Activated T-helper 1 cell treated with anti-CD3 and anti-CD28 coated beads, Interleukin-12 subunit alpha, Interleukin-12 subunit beta, Interleukin-2, Interleukin-4 antibody, amounts not matched to agents 30 ng/mL and 10 ng/mL and 1 ng/mL, durations not matched to agents 14 hours and 24 hours and 36 hours (primary cell): ENCODE measurements at regions of chr13 and their contacts with region 1.

Region 1: GRCh38 chr13:99436686-99437416 is 64.4 kb upstream of the TM9SF2 start:
- DNase-seq: peak; percentile 88
- H3K4me3 Mint-ChIP-seq: peak overlapping the region; percentile 40
- H3K27ac Mint-ChIP-seq: peak overlapping the region; percentile 65
- H3K4me1 Mint-ChIP-seq: peaks cover 60% of the 10 kb centered on the region
- H3K27me3 Mint-ChIP-seq: peaks cover 29% of the 10 kb centered on the region

Region 2: GRCh38 chr13:99176309-99177276 is 260.3 kb before region 1 on chr13:
- intact Hi-C with region 1: loop called (anchors 1 kb)
- DNase-seq: peak; percentile 59
- H3K4me3 Mint-ChIP-seq: peak overlapping the region; percentile 40
- H3K27ac Mint-ChIP-seq: no peak overlapping the region
- H3K4me1 Mint-ChIP-seq: peaks cover 24% of the 10 kb centered on the region
- H3K27me3 Mint-ChIP-seq: peaks cover 17% of the 10 kb centered on the region

Region 3: DNA sequence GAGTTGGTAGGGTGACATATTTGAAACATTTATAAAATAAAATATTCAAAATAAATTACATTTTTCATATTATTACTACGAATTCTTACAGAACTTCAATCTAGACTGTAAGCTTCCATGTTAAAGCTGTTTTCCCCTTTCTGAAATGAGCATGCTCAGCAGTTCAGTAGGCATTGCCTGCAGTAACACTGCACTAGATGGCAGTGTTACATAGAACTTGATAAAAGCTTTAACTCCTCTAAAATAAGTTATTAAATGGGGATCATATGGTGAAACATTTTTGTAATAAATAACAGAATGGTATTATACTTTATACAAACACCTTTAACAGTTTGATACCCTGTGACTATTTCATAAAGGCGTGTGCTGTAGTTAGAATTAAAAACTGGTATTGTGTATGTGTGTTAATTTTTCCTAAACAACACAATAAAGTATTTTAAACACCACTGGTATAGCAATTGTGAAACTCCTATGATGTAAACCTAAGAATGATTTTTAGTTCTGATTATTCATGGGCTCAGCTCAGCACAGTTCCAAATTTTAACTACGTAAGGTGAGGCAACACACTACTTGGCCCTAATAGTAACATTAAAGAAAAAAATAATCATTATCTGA is 167.1 kb before region 1 on chr13:
- intact Hi-C with region 1: loop called (anchors 1 kb)
- DNase-seq: no peak
- H3K4me3 Mint-ChIP-seq: no peak overlapping the region
- H3K27ac Mint-ChIP-seq: no peak overlapping the region
- H3K4me1 Mint-ChIP-seq: peaks cover 55% of the 10 kb centered on the region
- H3K27me3 Mint-ChIP-seq: no peaks in the 10 kb centered on the region

Region 4: DNA sequence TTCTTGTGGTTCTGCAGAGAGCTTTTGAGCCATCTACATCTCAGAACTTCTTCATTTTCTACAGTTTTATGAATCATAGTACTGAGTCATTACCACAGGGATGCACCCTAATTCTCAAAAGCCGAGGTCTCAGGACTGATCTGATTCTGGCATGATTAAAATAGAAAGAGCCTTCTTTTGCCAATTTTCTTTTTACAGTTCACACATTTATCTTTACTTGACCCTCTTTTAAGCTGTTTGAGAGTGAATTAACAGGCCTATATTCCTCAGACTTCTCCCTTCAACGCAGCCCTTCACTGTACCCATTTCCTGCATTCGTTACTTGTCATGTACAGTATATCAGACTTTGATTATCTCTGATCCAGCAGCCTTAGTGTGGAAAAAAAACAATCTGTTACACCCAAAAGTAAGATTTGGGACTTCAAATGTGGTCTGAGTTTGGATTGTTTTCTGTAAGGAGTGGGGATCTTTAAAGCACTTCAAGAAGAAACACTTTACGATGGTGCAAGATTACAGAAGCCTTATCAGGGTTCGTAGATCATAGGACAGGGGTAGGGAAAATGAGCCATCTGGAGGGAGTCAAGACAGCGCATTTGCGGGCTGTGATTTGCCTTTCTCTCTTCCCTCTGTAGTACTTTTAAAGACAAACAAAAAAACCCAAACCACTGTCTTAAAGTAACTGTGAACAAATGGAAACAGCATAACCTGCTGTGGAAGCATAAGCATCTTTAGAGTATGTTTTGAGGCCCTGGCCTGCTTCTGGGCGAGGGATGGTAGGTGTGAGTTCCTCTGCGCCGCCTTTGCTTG is 114.4 kb before region 1 on chr13:
- intact Hi-C with region 1: loop called (anchors 1 kb)
- DNase-seq: no peak
- H3K4me3 Mint-ChIP-seq: peak overlapping the region; percentile 38
- H3K27ac Mint-ChIP-seq: peak overlapping the region; percentile 96
- H3K4me1 Mint-ChIP-seq: peaks cover 68% of the 10 kb centered on the region
- H3K27me3 Mint-ChIP-seq: no peaks in the 10 kb centered on the region

Region 5: DNA sequence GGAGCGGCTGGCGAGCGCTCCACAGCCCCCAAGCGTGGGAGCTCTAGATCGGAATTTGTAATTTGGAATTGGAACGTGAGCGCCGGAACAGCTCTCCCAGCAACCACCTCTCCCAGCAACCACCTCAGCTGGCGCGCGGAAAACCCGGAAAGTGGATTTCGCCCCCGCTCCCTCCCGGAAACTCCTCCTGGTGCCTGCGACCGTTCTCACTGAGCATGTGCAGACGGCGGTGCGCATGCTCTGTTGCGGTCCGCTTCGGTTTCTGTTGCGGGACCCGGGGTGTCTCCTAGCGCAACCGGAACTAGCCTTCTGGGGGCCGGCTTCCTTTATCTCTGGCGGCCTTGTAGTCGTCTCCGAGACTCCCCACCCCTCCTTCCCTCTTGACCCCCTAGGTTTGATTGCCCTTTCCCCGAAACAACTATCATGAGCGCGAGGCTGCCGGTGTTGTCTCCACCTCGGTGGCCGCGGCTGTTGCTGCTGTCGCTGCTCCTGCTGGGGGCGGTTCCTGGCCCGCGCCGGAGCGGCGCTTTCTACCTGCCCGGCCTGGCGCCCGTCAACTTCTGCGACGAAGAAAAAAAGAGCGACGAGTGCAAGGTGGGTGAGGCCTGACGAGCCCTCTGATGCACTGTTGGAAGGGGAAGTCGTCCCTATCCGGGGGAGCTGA is 64.5 kb after region 1 on chr13 and contains the start of gene TM9SF2:
- intact Hi-C with region 1: loop called (anchors 1 kb)
- DNase-seq: peak; percentile 95
- H3K4me3 Mint-ChIP-seq: peak within 1 kb of the TSS; percentile 96
- H3K27ac Mint-ChIP-seq: peak within 1 kb of the TSS; percentile 95
- H3K4me1 Mint-ChIP-seq: peaks cover 70% of the 10 kb centered on the region
- H3K27me3 Mint-ChIP-seq: peaks cover 1% of the 10 kb centered on the region
- total RNA-seq, gene TM9SF2: 59.1 and 62.6 TPM in 2 replicates